Aorta (tissue), 5 donors: ENCODE measurements at regions of chr4 and their contacts with region 1.

Region 1: GRCh38 chr4:173025131-173025530 is 143.5 kb upstream of the GALNT7 start:
- DNase-seq: no peak
- ATAC-seq: peak; percentile 76
- H3K4me3 ChIP-seq: no peak overlapping the region
- H3K27ac ChIP-seq: no peak overlapping the region
- H3K4me1 ChIP-seq: no peaks in the 10 kb centered on the region
- H3K27me3 ChIP-seq: no peaks in the 10 kb centered on the region

Region 2: DNA sequence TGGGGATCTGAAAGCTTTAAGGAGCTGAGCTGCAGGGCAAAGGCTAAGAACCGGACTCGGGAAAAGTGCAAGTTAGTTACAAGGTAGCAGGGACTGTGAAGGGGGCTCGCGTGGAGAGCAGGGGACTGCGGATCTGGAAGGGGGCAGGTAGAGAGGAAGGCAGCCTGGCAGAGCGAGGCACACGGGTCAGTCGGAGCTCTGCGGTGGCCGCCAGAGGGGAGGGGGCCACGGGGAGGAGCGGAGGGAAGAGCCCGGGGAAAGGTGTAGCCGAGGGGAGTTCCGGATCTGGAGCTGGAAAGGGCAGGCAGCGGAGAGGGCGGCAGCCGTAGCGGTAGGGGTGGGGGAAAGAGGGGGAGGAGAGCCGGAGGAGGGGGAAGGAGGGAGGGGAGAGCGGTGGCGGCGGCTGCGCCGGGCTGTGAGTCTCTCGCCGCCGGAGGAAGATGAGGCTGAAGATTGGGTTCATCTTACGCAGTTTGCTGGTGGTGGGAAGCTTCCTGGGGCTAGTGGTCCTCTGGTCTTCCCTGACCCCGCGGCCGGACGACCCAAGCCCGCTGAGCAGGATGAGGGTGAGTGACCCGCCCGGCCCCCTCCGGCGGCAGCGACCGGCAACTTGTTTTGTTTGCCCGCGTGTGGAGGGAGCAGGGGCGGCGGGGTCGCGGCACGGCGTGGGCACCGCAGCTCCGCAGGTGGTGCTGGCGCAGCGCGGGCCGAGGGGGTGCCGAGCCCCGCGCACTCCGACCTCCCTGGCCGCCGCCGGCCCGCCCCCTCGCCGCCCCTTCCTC is 143.5 kb after region 1 on chr4 and contains the start of gene GALNT7:
- intact Hi-C with region 1: loop called (anchors 2 to 10 kb)
- DNase-seq: peak; percentile 81 to 88
- ATAC-seq: peak; percentile 78
- H3K4me3 ChIP-seq: peak within 1 kb of the TSS; percentile 77 to 83
- H3K27ac ChIP-seq: peak within 1 kb of the TSS; percentile 66 to 79
- H3K4me1 ChIP-seq: peaks cover 0 to 3% of the 10 kb centered on the region in 2 donors
- H3K27me3 ChIP-seq: no peaks in the 10 kb centered on the region
- total RNA-seq, gene GALNT7: 20.3 to 29.8 TPM

Region 3: DNA sequence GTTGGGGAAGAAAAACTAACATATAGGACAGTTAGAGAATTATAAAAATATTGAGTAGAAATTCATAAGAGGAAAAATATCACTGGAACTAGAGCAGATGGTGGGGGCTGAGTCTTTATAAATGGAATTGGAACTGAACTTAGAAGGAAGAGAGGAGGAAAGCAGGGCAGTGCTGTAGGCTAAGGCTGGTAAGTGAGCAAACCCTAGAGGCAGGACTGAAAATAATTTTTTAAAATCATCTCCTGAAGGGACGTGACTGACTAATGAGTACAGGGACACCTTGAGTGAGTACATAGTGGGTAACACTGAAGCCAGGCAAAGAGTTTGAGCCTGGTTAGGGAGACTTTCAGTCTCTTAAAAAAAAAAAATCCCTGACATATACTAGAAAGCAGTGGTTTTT is 206.8 kb after region 1 on chr4:
- intact Hi-C with region 1: loop called in 1 of 2 experiments (anchors 5 kb)
- DNase-seq: no peak
- ATAC-seq: no peak
- H3K4me3 ChIP-seq: no peak overlapping the region
- H3K27ac ChIP-seq: no peak overlapping the region
- H3K4me1 ChIP-seq: peaks cover 0 to 2% of the 10 kb centered on the region in 2 donors
- H3K27me3 ChIP-seq: no peaks in the 10 kb centered on the region

Region 4: DNA sequence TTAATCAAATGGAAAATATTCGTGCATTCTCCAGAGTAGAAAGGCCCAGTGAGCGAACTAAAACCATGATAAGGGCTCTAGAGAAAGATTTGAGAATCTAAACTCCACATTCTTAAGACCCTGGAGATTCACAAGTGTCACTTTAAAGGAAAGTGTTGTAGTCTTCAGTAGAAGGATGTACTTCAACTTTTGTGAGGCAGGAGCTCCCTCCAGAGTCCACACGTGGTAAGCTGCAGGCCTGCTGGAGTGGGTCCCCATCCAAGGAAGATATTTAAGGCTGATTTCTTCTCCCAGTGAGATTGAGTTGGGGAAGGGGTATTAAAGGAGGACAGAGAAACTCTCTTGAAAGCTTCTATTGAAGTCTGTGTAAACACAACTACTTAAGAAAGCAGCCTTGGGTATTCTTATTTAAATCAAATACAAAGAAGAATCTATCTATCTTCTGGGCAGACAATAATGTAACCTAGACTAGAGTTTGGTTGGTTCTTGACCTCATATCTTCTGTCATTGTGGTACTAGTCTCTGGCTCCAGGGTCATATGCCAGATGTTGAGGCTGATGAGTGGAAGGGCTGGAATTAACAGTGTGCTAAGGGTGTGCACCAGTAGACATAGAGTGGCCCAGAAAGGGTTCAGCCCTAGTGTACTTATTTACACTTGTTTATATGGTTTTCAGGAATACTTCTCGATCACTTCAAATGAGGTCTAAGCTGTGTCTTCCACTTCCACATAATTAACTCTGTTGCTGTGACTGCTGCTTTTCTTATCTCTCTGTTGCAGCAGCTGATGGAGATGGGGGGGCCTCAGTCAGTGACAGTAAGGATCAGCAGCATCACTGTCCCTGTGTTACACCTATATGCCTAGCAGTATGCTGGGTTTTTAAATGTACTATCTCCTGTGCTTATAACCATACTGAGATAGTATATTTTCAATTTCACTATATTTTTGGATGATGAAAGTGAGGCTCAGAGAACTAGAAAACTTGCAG is 232.9 kb after region 1 on chr4:
- intact Hi-C with region 1: loop called (anchors 2 to 5 kb)
- DNase-seq: peak; percentile 70 to 76
- ATAC-seq: peak; percentile 77
- H3K4me3 ChIP-seq: no peak overlapping the region
- H3K27ac ChIP-seq: no peak overlapping the region
- H3K4me1 ChIP-seq: peaks cover 0 to 5% of the 10 kb centered on the region in 2 donors
- H3K27me3 ChIP-seq: no peaks in the 10 kb centered on the region